A673 (cell line): ENCODE measurements at regions of chr3 and their contacts with region 1.

Region 1: GRCh38 chr3:125150525-125151441 is 61.8 kb downstream of the SLC12A8 start:
- DNase-seq: peak; percentile 77
- H3K4me3 ChIP-seq: no peak overlapping the region
- H3K27ac ChIP-seq: no peak overlapping the region
- H3K4me1 ChIP-seq: peaks cover 1% of the 10 kb centered on the region
- H3K27me3 ChIP-seq: no peaks in the 10 kb centered on the region
- CTCF ChIP-seq: peak; percentile 80

Region 2: DNA sequence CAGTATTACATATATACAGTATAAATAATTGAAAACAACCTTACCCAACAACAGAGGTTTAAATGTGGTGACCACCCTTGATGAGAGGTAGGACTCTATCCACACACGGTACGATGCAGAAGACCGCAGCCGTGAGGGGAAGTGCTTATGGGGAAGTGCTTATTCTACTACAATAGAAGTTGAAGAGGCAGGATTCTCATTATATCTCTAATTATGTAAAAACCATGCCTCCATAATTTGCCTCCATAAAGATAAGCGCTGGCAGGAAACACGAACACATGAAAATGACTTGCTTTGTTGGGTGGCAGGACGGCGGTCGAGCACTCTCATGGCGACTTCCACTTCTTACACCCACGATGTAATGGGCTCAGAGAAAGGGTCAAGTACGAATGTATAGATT is 209.0 kb before region 1 on chr3:
- CTCF ChIA-PET with region 1: no interaction called
- POLR2A ChIA-PET with region 1: no interaction called
- intact Hi-C with region 1: loop called (anchors 5 kb)
- DNase-seq: no peak
- H3K4me3 ChIP-seq: no peak overlapping the region
- H3K27ac ChIP-seq: no peak overlapping the region
- H3K4me1 ChIP-seq: no peaks in the 10 kb centered on the region
- H3K27me3 ChIP-seq: no peaks in the 10 kb centered on the region
- CTCF ChIP-seq: no peak

Region 3: GRCh38 chr3:125437631-125438435 is 287.1 kb after region 1 on chr3:
- CTCF ChIA-PET with region 1: interaction called, 10 read pairs
- POLR2A ChIA-PET with region 1: no interaction called
- intact Hi-C with region 1: loop called (anchors 5 kb)
- DNase-seq: peak; percentile 53
- H3K4me3 ChIP-seq: no peak overlapping the region
- H3K27ac ChIP-seq: no peak overlapping the region
- H3K4me1 ChIP-seq: no peaks in the 10 kb centered on the region
- H3K27me3 ChIP-seq: no peaks in the 10 kb centered on the region
- CTCF ChIP-seq: peak; percentile 97

Region 4: DNA sequence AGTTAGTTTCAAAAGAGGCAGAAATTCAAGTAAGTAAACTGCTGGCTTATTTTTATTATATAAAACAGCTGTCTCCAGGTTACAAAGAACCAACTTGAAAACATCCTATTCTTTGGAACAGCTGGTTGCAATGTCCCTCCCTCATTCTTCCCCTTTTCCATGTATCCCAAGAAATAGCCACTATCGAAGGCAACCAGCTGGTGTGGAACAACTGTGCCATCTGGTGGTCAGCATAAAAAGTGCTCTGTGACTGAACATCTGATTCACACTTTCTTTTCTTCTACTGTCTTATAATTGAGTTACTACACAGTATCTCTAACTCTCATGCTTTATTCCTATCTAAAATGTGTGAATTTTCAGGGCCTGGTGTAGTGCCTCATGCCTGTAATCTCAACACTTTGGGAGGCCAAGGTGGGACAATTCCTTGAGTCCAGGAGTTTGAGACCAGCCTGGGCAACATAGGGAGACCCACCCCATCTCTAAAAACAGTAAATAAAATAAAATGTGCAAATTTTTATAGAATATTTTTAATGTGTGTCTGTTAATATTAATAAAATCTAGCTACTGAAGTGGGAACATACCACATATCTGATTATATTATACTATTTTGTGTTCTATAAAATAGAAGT is 434.9 kb after region 1 on chr3:
- CTCF ChIA-PET with region 1: no interaction called
- POLR2A ChIA-PET with region 1: no interaction called
- intact Hi-C with region 1: loop called (anchors 10 kb)
- DNase-seq: peak; percentile 72
- H3K4me3 ChIP-seq: no peak overlapping the region
- H3K27ac ChIP-seq: no peak overlapping the region
- H3K4me1 ChIP-seq: peaks cover 23% of the 10 kb centered on the region
- H3K27me3 ChIP-seq: no peaks in the 10 kb centered on the region
- CTCF ChIP-seq: peak; percentile 94